ENCODE measurements at regions of chr5 and their contacts with region 1.

Region 1: DNA sequence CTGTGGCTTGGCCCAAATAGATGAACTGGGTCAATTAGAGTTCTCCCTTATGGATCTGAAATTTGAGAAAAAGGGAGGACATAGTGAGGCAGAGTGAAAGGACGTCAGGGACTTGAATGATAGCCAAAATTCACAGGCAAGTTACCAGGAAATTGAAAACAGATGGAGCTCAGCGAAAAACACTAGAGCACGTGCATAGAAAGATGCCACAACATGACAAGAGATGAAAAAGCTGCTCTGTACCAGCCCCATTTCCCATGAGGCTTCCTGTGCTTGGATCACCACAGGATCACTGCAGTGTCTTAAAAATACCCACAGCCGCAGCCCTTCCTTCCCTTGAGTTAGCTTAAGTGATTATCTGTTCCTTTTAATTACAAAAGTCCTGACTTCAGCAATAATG is 39.0 kb upstream of the HOMER1 start:
- DNase-seq: peak in 1 of 2 donors; percentile 26
- H3K4me3 ChIP-seq: no peak overlapping the region
- H3K27ac ChIP-seq: no peak overlapping the region
- H3K4me1 ChIP-seq: peaks cover 0 to 14% (median 0%) of the 10 kb centered on the region in 4 donors
- H3K27me3 ChIP-seq: no peaks in the 10 kb centered on the region
- CTCF ChIP-seq: no peak
- EP300 ChIP-seq: no peak
- POLR2A ChIP-seq: no peak

Region 2: GRCh38 chr5:79857714-79858409 is 304.9 kb after region 1 on chr5:
- intact Hi-C with region 1: loop called (anchors 5 kb)
- DNase-seq: peak; percentile 81 to 88
- H3K4me3 ChIP-seq: no peak overlapping the region
- H3K27ac ChIP-seq: no peak overlapping the region
- H3K4me1 ChIP-seq: peaks cover 0 to 5% (median 0%) of the 10 kb centered on the region in 4 donors
- H3K27me3 ChIP-seq: peaks cover 0 to 3% (median 0%) of the 10 kb centered on the region in 3 donors
- CTCF ChIP-seq: peak in 5 of 7 experiments; percentile 87 to 95 (median 90)
- EP300 ChIP-seq: no peak
- POLR2A ChIP-seq: no peak

Measured in stomach (tissue), 19 donors.